Activated naive CD4-positive, alpha-beta T cell treated with anti-CD3 and anti-CD28 coated beads for 36 hours (primary cell): ENCODE measurements at regions of chr1 and their contacts with region 1.

Region 1: GRCh38 chr1:201170533-201171062 is 16.3 kb upstream of the TMEM9 start:
- DNase-seq: peak; percentile 93
- H3K4me3 Mint-ChIP-seq: peak overlapping the region; percentile 76
- H3K27ac Mint-ChIP-seq: peak overlapping the region; percentile 85
- H3K4me1 Mint-ChIP-seq: peaks cover 21% of the 10 kb centered on the region
- H3K27me3 Mint-ChIP-seq: peaks cover 2% of the 10 kb centered on the region

Region 2: DNA sequence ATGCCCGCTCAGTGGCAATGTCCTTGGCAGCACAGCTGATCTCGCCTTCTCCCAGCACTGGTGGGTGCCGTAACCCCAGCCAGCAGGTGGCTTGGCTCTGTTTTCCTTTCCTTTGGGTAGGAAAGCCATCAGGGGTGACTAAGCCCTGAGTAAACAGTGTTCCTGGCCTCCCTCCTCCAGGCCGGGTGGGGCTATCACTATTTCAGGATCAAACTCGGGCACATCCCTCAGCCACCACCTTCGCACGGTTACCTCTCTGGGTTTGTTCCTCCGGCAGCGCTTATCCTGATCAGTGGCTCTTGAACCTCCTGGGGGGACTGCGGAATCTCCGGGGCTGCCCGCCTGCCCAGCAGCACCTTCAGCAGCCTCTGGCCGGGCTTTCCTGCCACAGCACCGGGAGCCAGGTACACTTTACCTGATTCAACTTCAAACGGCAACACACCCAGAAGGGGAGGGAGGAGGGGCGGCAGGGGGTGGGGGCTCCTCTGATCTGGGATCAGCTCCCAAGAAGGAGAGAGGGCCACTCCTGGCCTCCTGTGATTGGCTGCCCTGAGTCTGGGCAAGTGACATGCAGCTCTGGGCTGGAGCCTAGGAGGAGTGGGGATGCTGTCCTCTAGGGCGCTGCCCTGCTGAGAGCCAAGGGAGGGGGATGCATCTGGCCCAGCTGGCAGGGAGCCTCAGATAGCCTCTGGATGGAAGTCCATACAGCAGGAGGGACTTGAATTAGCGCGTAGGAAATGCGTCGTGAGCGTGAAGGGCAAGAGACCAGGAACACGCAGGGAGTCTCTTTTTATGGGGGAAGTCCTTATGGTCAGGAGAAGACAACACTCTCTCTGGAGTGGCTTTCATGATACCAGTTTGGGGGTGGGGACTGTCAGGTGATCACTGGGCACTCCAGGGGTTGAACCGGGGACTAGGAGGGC is 43.5 kb before region 1 on chr1 and contains the start of gene ASCL5:
- CTCF ChIA-PET with region 1: no interaction called
- intact Hi-C with region 1: no loop called
- DNase-seq: no peak
- H3K4me3 Mint-ChIP-seq: no peak within 1 kb of the TSS
- H3K27ac Mint-ChIP-seq: no peak within 1 kb of the TSS
- H3K4me1 Mint-ChIP-seq: no peaks in the 10 kb centered on the region
- H3K27me3 Mint-ChIP-seq: peaks cover 7% of the 10 kb centered on the region
- total RNA-seq, gene ASCL5: not detected

Region 3: DNA sequence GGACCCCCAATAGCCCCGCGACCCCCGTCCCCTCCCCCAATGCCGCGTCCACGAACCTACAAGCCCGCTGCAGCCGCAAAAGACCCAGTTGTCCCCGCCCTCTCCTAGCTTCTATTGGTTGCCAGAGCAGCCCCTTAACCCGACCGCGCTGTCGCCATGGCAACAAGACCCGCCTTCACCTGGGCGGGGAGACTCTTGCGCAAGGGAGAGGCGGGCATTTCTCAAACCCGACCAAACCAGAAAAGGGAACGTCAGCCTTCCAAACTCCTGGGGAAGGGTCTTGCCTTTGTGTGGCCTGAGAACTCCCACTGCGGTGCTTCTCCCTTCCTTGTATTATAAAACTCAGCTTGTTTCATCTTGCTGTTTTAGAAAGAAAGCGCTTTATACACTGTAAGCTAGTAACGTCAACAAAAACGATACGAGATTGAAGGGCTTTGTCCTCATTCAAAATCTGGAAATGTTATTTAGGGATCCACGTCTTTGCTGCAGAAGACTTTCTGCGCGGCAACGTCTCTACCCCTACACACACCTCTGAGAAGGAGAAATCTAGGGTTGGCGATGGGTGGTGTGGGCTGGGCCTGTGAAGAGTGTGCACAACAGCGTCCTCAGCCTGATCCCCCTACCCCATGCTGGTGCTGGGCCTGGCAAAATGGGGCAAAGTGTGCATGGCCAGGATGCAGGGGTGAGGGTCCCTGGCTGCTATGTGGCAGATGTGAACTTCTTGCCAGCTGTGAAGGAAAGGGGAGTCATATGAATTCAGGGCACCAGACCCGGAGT is 16.0 kb before region 1 on chr1 and contains the start of gene TMEM9:
- CTCF ChIA-PET with region 1: interaction called, 5 read pairs
- intact Hi-C with region 1: loop called (anchors 1 kb)
- DNase-seq: peak; percentile 99
- H3K4me3 Mint-ChIP-seq: peak within 1 kb of the TSS; percentile 80
- H3K27ac Mint-ChIP-seq: peak within 1 kb of the TSS; percentile 73
- H3K4me1 Mint-ChIP-seq: peaks cover 19% of the 10 kb centered on the region
- H3K27me3 Mint-ChIP-seq: no peaks in the 10 kb centered on the region
- total RNA-seq, gene TMEM9: 19.7 to 20.5 TPM

Region 4: GRCh38 chr1:201191653-201192260 is 21.2 kb after region 1 on chr1:
- CTCF ChIA-PET with region 1: no interaction called
- intact Hi-C with region 1: loop called (anchors 1 kb)
- DNase-seq: peak; percentile 53
- H3K4me3 Mint-ChIP-seq: no peak overlapping the region
- H3K27ac Mint-ChIP-seq: no peak overlapping the region
- H3K4me1 Mint-ChIP-seq: no peaks in the 10 kb centered on the region
- H3K27me3 Mint-ChIP-seq: peaks cover 4% of the 10 kb centered on the region

Region 5: GRCh38 chr1:201375169-201375568 is 204.6 kb after region 1 on chr1:
- CTCF ChIA-PET with region 1: no interaction called
- intact Hi-C with region 1: no loop called
- DNase-seq: no peak
- H3K4me3 Mint-ChIP-seq: no peak overlapping the region
- H3K27ac Mint-ChIP-seq: no peak overlapping the region
- H3K4me1 Mint-ChIP-seq: no peaks in the 10 kb centered on the region
- H3K27me3 Mint-ChIP-seq: peaks cover 5% of the 10 kb centered on the region

Region 6: GRCh38 chr1:201399352-201400126 is 228.9 kb after region 1 on chr1:
- CTCF ChIA-PET with region 1: no interaction called
- intact Hi-C with region 1: no loop called
- DNase-seq: no peak
- H3K4me3 Mint-ChIP-seq: no peak overlapping the region
- H3K27ac Mint-ChIP-seq: no peak overlapping the region
- H3K4me1 Mint-ChIP-seq: no peaks in the 10 kb centered on the region
- H3K27me3 Mint-ChIP-seq: peaks cover 33% of the 10 kb centered on the region